ENCODE measurements at regions of chr2 and their contacts with region 1.

Region 1: GRCh38 chr2:162007447-162008040 is 66.5 kb downstream of the DPP4 start:
- DNase-seq: no peak
- ATAC-seq: no peak
- H3K4me3 ChIP-seq: no peak overlapping the region
- H3K27ac ChIP-seq: no peak overlapping the region
- H3K4me1 ChIP-seq: peaks cover 0 to 5% (median 0%) of the 10 kb centered on the region in 12 donors
- H3K27me3 ChIP-seq: no peaks in the 10 kb centered on the region
- CTCF ChIP-seq: peak; percentile 59 to 90 (median 75)
- POLR2A ChIP-seq: no peak

Region 2: DNA sequence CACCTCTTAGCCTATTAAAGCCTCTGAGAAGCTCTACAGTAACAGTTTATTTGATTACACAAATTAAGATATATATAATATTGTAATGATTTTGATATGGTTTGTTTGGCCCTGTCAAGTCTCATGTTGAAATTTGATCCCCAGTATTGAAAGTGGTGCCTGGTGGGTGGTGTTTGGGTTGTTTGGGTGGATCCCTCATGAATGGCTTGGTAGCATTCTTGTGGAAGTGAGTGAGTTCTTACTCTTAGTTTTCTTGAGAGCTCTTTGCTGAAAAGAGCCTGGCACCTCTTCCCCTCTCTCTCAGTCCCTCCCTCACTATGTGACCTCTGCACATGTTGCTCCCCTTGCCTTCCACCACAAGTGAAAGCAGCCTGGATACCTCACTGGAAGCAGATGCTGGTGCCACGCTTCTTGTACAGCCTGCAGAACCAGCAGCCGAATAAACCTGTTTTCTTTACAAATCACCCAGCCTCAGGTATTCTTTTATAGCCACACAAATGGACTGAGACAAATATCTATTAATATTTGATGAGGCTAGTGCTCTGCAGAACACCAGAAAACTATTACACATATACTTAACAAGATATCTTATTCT is 330.5 kb before region 1 on chr2:
- intact Hi-C with region 1: no loop called
- DNase-seq: no peak
- ATAC-seq: no peak
- H3K4me3 ChIP-seq: no peak overlapping the region
- H3K27ac ChIP-seq: no peak overlapping the region
- H3K4me1 ChIP-seq: no peaks in the 10 kb centered on the region
- H3K27me3 ChIP-seq: no peaks in the 10 kb centered on the region
- CTCF ChIP-seq: no peak
- POLR2A ChIP-seq: no peak

Region 3: DNA sequence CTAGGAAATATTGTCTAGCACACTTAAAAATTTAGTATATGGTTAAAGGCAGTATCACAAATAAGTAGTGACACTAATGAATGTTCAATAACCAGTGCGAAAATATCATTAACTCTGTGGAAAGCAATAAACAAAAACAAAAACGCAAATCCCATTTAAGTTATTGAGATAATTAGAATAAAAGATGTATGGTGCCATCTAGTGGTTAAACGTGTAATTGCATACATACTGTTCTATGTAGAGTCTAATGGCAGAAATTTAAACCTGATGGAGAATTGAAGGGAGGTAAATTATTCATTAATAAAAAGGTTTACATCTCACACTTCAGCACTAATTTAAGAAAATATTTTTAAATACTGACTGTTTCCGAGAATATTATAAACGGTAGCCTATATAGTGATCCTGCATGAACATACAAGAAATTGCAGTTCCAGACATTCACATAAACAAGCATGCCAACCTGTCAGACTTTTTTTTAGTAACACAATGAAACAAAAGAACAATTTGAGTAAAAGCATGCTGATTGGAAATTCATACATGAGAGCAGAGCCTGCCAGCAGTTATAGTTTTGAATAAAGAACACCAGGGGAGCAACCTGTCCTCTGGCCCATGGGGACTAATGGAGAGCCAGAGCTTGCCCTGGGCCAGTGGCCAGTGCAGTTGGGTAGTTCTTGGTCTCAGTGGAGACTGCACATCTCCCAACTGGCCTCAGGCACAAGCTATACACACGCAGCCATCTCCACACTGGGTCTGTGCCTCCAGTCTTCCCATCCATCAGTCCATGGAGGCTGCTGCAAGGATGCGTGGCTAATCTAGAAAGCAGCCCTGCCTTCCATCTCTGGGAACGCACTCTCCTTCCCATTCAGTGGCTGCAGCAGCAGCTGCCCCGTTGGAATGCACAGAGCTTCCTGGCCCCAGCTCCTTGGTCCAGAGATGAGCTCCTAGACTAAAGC is 116.5 kb after region 1 on chr2:
- intact Hi-C with region 1: loop called (anchors 1 to 5 kb)
- DNase-seq: no peak
- ATAC-seq: peak in 2 of 4 donors; percentile 49 to 55
- H3K4me3 ChIP-seq: no peak overlapping the region
- H3K27ac ChIP-seq: no peak overlapping the region
- H3K4me1 ChIP-seq: peaks cover 0 to 18% (median 0%) of the 10 kb centered on the region in 12 donors
- H3K27me3 ChIP-seq: no peaks in the 10 kb centered on the region
- CTCF ChIP-seq: peak; percentile 74 to 96 (median 86)
- POLR2A ChIP-seq: no peak